ENCODE measurements at regions of chr5 and their contacts with region 1.

Region 1: DNA sequence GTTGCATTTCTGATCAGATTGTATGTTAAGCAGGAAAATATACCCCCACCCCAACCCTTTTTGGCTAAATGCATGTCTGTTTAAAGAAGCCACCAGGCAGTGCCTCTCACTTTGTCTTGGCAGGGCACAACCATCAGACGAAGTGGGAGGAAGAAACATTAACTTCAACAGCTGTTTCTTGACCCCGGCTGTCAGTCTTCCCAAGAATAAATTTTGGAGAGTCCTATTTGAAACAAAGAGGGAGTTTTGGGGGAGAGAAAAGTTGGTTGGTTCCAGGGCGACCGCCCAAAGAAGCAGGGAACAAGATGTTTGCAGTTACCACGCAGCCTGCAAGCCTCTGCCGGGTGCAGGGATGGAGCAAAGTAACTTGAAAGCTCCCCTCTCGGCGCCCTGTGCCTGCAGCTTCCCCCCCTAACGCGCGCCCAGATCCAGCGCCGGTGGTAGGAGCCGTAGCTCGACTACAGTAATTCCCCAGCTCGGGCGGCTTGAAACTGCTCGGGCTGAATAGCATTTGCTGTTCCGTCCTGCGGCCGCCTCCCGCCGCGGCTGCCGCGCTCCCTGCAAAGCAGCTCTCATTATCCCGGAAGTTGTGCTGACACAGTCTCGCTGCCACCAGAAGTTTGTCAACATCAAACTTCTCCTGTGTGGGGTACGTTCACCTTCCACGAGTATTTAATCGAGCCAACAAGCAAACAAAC is 100.7 kb upstream of the SSBP2 start:
- DNase-seq: peak; percentile 90
- H3K4me3 ChIP-seq: peak overlapping the region; percentile 45 to 54
- H3K27ac ChIP-seq: peak overlapping the region; percentile 92 to 99
- H3K4me1 ChIP-seq: peaks cover 55 to 56% of the 10 kb centered on the region in 2 experiments
- H3K27me3 ChIP-seq: no peaks in the 10 kb centered on the region
- CTCF ChIP-seq: no peak
- EP300 ChIP-seq: peak; percentile 99 to 100
- RAD21 ChIP-seq: peak; percentile 69

Region 2: DNA sequence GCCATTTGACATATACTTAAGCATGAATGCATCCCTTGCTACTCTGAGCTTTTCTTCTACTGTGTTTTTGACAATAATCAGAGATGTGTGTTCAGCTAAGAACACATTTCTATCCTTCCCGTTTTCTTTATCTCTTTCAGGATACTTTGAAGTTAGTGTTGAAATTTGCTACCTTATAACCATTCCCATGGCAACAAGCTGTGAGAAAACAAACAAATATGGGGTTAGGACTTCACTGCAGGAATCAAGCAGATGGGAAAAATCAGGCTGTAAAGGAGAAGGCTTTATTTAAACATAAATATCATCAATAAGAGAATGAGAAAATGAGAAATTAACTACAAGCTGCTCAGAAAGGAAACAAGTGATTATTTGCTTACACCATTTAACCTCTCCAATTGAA is 515.1 kb before region 1 on chr5:
- CTCF ChIA-PET with region 1: no interaction called
- POLR2A ChIA-PET with region 1: no interaction called
- DNase-seq: no peak
- H3K4me3 ChIP-seq: no peak overlapping the region
- H3K27ac ChIP-seq: no peak overlapping the region
- H3K4me1 ChIP-seq: no peaks in the 10 kb centered on the region; a peak in 1 of 4 replicates
- H3K27me3 ChIP-seq: peaks cover 4% of the 10 kb centered on the region; the same call in 1 of the 2 replicates
- CTCF ChIP-seq: no peak
- EP300 ChIP-seq: no peak
- RAD21 ChIP-seq: no peak

Region 3: GRCh38 chr5:81838307-81838906 is 13.2 kb before region 1 on chr5:
- CTCF ChIA-PET with region 1: interaction called, 22 read pairs
- POLR2A ChIA-PET with region 1: interaction called, 5 read pairs
- DNase-seq: no peak
- H3K4me3 ChIP-seq: no peak overlapping the region
- H3K27ac ChIP-seq: no peak overlapping the region; a peak in 1 of 4 replicates
- H3K4me1 ChIP-seq: peaks cover 3 to 27% of the 10 kb centered on the region in 2 experiments; a peak in 2 of 4 replicates
- H3K27me3 ChIP-seq: no peaks in the 10 kb centered on the region
- CTCF ChIP-seq: peak; percentile 59
- EP300 ChIP-seq: no peak
- RAD21 ChIP-seq: peak; percentile 52

Region 4: GRCh38 chr5:81971712-81972495 is 120.3 kb after region 1 on chr5 and contains the start of gene ATG10:
- CTCF ChIA-PET with region 1: interaction called, 14 read pairs
- POLR2A ChIA-PET with region 1: interaction called, 16 read pairs
- DNase-seq: peak; percentile 99
- H3K4me3 ChIP-seq: peak within 1 kb of the TSS; percentile 80 to 84
- H3K27ac ChIP-seq: peak within 1 kb of the TSS; percentile 92 to 98
- H3K4me1 ChIP-seq: peaks cover 0 to 8% of the 10 kb centered on the region in 2 experiments; a peak in 3 of 4 replicates
- H3K27me3 ChIP-seq: no peaks in the 10 kb centered on the region
- CTCF ChIP-seq: no peak
- EP300 ChIP-seq: peak in 1 of 2 experiments; percentile 33; a peak in 1 of 4 replicates
- RAD21 ChIP-seq: no peak
- polyA plus RNA-seq, gene ATG10: 3.2 and 3.4 TPM in 2 replicates

Measured in SK-N-SH (cell line).